PC-9 (cell line): ENCODE measurements at regions of chr3 and their contacts with region 1.

Region 1: GRCh38 chr3:114362815-114363214 is 69.0 kb downstream of the TIGIT start:
- DNase-seq: no peak
- H3K4me3 ChIP-seq: no peak overlapping the region
- H3K27ac ChIP-seq: no peak overlapping the region
- H3K4me1 ChIP-seq: no peaks in the 10 kb centered on the region
- H3K27me3 ChIP-seq: no peaks in the 10 kb centered on the region
- CTCF ChIP-seq: peak; percentile 66

Region 2: GRCh38 chr3:114152519-114153151 is 210.2 kb before region 1 on chr3:
- CTCF ChIA-PET with region 1: no interaction called
- POLR2A ChIA-PET with region 1: no interaction called
- intact Hi-C with region 1: loop called (anchors 5 kb)
- DNase-seq: peak; percentile 60 to 85
- H3K4me3 ChIP-seq: peak overlapping the region; percentile 61
- H3K27ac ChIP-seq: no peak overlapping the region
- H3K4me1 ChIP-seq: peaks cover 9% of the 10 kb centered on the region; the same call in 1 of the 2 replicates
- H3K27me3 ChIP-seq: no peaks in the 10 kb centered on the region
- CTCF ChIP-seq: peak; percentile 91

Region 3: GRCh38 chr3:114405202-114405990 is 42.6 kb after region 1 on chr3:
- CTCF ChIA-PET with region 1: no interaction called
- POLR2A ChIA-PET with region 1: no interaction called
- intact Hi-C with region 1: no loop called
- DNase-seq: no peak
- H3K4me3 ChIP-seq: no peak overlapping the region
- H3K27ac ChIP-seq: no peak overlapping the region
- H3K4me1 ChIP-seq: no peaks in the 10 kb centered on the region
- H3K27me3 ChIP-seq: no peaks in the 10 kb centered on the region
- CTCF ChIP-seq: no peak